Natural killer cell (primary cell): ENCODE measurements at regions of chr9 and their contacts with region 1.

Region 1: DNA sequence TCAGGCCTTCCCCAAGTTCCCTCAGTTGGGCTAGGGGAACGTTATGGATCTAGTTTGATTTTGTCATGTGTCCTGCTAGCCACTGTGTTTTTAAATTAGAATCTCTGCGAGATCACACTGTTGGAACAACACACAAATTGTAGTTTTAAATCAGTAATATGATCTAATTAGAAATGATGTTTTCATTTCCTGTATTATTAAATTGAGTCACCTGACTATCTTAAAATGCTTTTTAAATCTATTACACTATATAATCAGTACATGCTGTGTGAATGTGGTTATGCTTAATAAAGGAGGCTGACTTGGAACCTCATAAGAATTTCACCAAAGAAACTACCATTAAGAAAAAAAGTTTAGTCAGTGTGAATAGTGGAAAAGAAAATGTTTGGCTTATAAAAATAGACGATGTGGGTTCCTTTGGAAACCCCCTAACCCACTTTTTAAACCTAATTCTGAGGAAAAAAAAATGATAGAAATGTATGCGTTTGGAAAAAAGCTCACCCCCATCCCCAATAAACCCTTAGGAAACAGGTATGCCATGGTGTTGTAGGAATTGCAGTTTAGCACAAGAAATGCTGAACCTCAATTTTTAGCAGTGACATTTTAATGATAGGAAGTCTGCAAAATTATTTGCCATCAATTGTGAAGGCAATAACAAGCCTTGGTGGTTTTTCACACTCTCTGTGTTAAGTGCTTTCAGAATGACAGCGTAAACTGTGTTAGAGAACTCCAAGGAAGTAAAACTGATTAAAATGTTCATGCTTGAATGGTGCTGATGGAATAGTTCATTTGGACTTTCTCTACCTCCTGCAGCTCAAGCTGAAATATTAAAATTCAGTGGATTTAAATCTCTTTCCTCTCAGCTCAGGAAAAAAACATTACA is 59.0 kb downstream of the TLE4 start:
- DNase-seq: peak in 1 of 2 donors; percentile 37
- ATAC-seq: peak; percentile 83 to 87 (median 86)
- H3K4me3 ChIP-seq: no peak overlapping the region
- H3K4me3 Mint-ChIP-seq: peak overlapping the region; percentile 78
- H3K27ac ChIP-seq: peak overlapping the region; percentile 14
- H3K27ac Mint-ChIP-seq: peak overlapping the region; percentile 80 to 85
- H3K4me1 ChIP-seq: peaks cover 27% of the 10 kb centered on the region
- H3K4me1 Mint-ChIP-seq: peaks cover 77 to 85% of the 10 kb centered on the region in 2 donors
- H3K27me3 ChIP-seq: no peaks in the 10 kb centered on the region
- H3K27me3 Mint-ChIP-seq: no peaks in the 10 kb centered on the region
- CTCF ChIP-seq: no peak

Region 2: GRCh38 chr9:79662537-79662956 is 31.8 kb after region 1 on chr9:
- intact Hi-C with region 1: loop called (anchors 2 kb)
- DNase-seq: peak in 1 of 2 donors; percentile 32
- ATAC-seq: no peak
- H3K4me3 ChIP-seq: no peak overlapping the region
- H3K4me3 Mint-ChIP-seq: no peak overlapping the region
- H3K27ac ChIP-seq: no peak overlapping the region
- H3K27ac Mint-ChIP-seq: peak overlapping the region; percentile 31 to 49
- H3K4me1 ChIP-seq: peaks cover 6% of the 10 kb centered on the region
- H3K4me1 Mint-ChIP-seq: peaks cover 56 to 64% of the 10 kb centered on the region in 2 donors
- H3K27me3 ChIP-seq: no peaks in the 10 kb centered on the region
- H3K27me3 Mint-ChIP-seq: no peaks in the 10 kb centered on the region
- CTCF ChIP-seq: no peak